ENCODE measurements at regions of chr11 and their contacts with region 1.

Region 1: GRCh38 chr11:11798586-11799438 is 43.0 kb upstream of the USP47 start:
- DNase-seq: peak; percentile 85
- H3K4me3 Mint-ChIP-seq: no peak overlapping the region
- H3K27ac Mint-ChIP-seq: no peak overlapping the region
- H3K4me1 Mint-ChIP-seq: no peaks in the 10 kb centered on the region
- H3K27me3 Mint-ChIP-seq: peaks cover 19% of the 10 kb centered on the region

Region 2: GRCh38 chr11:11848891-11849746 is 50.3 kb after region 1 on chr11:
- CTCF ChIA-PET with region 1: interaction called, 21 read pairs
- DNase-seq: peak; percentile 72
- H3K4me3 Mint-ChIP-seq: no peak overlapping the region
- H3K27ac Mint-ChIP-seq: no peak overlapping the region
- H3K4me1 Mint-ChIP-seq: peaks cover 46% of the 10 kb centered on the region
- H3K27me3 Mint-ChIP-seq: no peaks in the 10 kb centered on the region

Region 3: GRCh38 chr11:11910541-11910940 is 111.7 kb after region 1 on chr11:
- CTCF ChIA-PET with region 1: no interaction called
- DNase-seq: no peak
- H3K4me3 Mint-ChIP-seq: no peak overlapping the region
- H3K27ac Mint-ChIP-seq: no peak overlapping the region
- H3K4me1 Mint-ChIP-seq: no peaks in the 10 kb centered on the region
- H3K27me3 Mint-ChIP-seq: no peaks in the 10 kb centered on the region

Measured in activated naive CD4-positive, alpha-beta T cell treated with anti-CD3 and anti-CD28 coated beads, Interleukin-2, amount 10 ng/mL, durations not matched to agents 7 days and 5 days (primary cell).